Activated CD4-positive, alpha-beta memory T cell treated with anti-CD3 and anti-CD28 coated beads for 36 hours (primary cell): ENCODE measurements at regions of chr12 and their contacts with region 1.

Region 1: GRCh38 chr12:17763366-17763765 is 326.6 kb downstream of the RERGL start:
- DNase-seq: no peak
- H3K4me3 Mint-ChIP-seq: no peak overlapping the region
- H3K27ac Mint-ChIP-seq: no peak overlapping the region
- H3K4me1 Mint-ChIP-seq: no peaks in the 10 kb centered on the region
- H3K27me3 Mint-ChIP-seq: no peaks in the 10 kb centered on the region

Region 2: DNA sequence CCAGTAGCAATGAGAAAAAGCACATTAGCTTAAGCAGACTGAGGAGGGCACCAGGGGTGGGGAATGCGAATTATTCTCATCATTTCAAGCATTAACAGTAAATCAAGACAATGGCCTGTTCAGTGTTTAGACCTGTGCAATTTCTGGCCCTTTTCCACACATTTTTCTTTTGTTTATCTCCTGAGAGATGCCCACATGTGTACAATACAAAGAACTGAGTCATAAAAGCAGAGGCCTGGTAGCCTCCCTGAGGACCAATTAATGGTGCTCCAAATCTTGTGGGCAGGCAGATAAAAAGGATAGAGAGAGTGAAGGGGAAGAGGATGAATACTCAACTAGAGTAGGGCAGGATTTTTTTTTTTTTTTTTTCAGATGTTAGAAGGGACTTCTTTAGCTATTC is 154.2 kb before region 1 on chr12:
- CTCF ChIA-PET with region 1: no interaction called
- POLR2A ChIA-PET with region 1: no interaction called
- intact Hi-C with region 1: no loop called
- DNase-seq: no peak
- H3K4me3 Mint-ChIP-seq: no peak overlapping the region
- H3K27ac Mint-ChIP-seq: no peak overlapping the region
- H3K4me1 Mint-ChIP-seq: no peaks in the 10 kb centered on the region
- H3K27me3 Mint-ChIP-seq: no peaks in the 10 kb centered on the region

Region 3: DNA sequence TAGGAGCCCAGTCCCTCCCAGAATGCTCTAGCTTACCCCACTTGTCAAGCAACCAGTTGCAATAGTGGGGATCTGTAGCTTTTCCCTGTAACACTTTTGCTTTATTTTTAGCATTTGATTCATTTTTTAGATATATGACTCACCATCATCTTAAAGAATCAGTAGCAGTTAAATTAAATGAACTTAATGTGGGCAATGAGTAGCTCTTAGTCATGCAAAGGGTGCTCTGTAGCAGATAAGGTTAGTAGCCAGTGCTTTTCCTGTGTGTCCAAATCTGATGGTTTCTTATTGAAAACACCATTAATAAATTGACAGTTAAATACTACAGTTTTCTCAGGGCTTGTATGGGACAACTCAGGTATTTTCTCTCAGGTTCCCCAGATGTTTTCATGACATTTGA is 14.9 kb after region 1 on chr12:
- CTCF ChIA-PET with region 1: no interaction called
- POLR2A ChIA-PET with region 1: no interaction called
- intact Hi-C with region 1: no loop called
- DNase-seq: no peak
- H3K4me3 Mint-ChIP-seq: no peak overlapping the region
- H3K27ac Mint-ChIP-seq: no peak overlapping the region
- H3K4me1 Mint-ChIP-seq: no peaks in the 10 kb centered on the region
- H3K27me3 Mint-ChIP-seq: no peaks in the 10 kb centered on the region

Region 4: GRCh38 chr12:17853054-17853453 is 89.7 kb after region 1 on chr12:
- CTCF ChIA-PET with region 1: no interaction called
- POLR2A ChIA-PET with region 1: no interaction called
- intact Hi-C with region 1: loop called (anchors 2 kb)
- DNase-seq: no peak
- H3K4me3 Mint-ChIP-seq: no peak overlapping the region
- H3K27ac Mint-ChIP-seq: no peak overlapping the region
- H3K4me1 Mint-ChIP-seq: no peaks in the 10 kb centered on the region
- H3K27me3 Mint-ChIP-seq: no peaks in the 10 kb centered on the region